Naive thymus-derived CD4-positive, alpha-beta T cell (primary cell): ENCODE measurements at regions of chr12 and their contacts with region 1.

Region 1: GRCh38 chr12:15590180-15590826 is 198.9 kb downstream of the EPS8 start:
- DNase-seq: peak; percentile 12 to 74 (median 66)
- ATAC-seq: peak; percentile 98
- H3K4me3 ChIP-seq: peak overlapping the region; percentile 40
- H3K4me3 Mint-ChIP-seq: peak overlapping the region; percentile 63 to 88 (median 78)
- H3K27ac ChIP-seq: no peak overlapping the region
- H3K27ac Mint-ChIP-seq: peak overlapping the region in 8 of 9 donors; percentile 61 to 86 (median 69)
- H3K4me1 ChIP-seq: peaks cover 0 to 5% of the 10 kb centered on the region in 2 donors
- H3K4me1 Mint-ChIP-seq: peaks cover 0 to 12% (median 8%) of the 10 kb centered on the region in 7 donors
- H3K27me3 ChIP-seq: no peaks in the 10 kb centered on the region
- H3K27me3 Mint-ChIP-seq: peaks cover 0 to 4% (median 0%) of the 10 kb centered on the region in 5 donors

Region 2: DNA sequence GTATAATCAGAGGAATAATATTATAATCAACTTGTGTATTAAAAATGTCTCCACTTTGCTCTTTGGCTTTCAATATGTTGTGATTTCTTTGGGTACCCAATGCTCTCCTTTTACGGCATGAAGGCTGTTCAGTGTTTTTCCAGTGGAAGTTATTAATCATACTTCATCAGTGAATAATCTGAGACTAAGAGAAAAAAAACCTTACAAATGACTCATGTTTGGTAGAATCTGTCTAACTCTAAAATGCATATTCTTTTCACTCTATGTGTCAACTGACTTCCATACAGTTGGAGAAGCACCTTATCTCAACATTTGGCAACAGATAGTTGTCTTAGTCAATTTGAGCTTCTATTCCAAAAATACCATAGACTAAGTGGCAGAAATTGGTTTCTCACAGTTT is 185.8 kb before region 1 on chr12:
- CTCF ChIA-PET with region 1: no interaction called
- POLR2A ChIA-PET with region 1: no interaction called
- intact Hi-C with region 1: no loop called
- DNase-seq: no peak
- ATAC-seq: no peak
- H3K4me3 ChIP-seq: no peak overlapping the region
- H3K4me3 Mint-ChIP-seq: no peak overlapping the region
- H3K27ac ChIP-seq: no peak overlapping the region
- H3K27ac Mint-ChIP-seq: no peak overlapping the region
- H3K4me1 ChIP-seq: no peaks in the 10 kb centered on the region
- H3K4me1 Mint-ChIP-seq: no peaks in the 10 kb centered on the region
- H3K27me3 ChIP-seq: no peaks in the 10 kb centered on the region
- H3K27me3 Mint-ChIP-seq: peaks cover 0 to 31% (median 14%) of the 10 kb centered on the region in 5 donors

Region 3: DNA sequence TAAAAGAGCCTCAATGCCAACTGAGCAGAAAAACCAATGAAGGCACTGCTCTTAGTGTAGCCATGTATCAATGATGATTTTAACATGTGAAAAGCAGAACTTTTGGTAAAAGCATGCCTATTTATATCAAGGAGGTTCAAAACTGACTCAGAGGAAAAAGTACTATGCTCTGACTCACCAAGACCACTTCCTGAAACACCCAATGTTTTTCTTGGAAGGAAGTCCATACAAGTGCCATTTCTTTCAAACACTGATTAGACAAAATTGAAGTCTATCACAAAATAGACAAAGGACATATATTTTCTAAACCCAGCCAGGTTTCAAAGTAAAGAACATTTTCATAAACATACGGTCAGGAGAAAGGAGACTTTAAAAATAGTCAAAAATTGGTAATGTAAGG is 110.3 kb after region 1 on chr12:
- CTCF ChIA-PET with region 1: no interaction called
- POLR2A ChIA-PET with region 1: no interaction called
- intact Hi-C with region 1: loop called in 1 of 2 experiments (anchors 5 kb)
- DNase-seq: no peak
- ATAC-seq: peak; percentile 64
- H3K4me3 ChIP-seq: no peak overlapping the region
- H3K4me3 Mint-ChIP-seq: peak overlapping the region in 1 of 10 donors; percentile 74
- H3K27ac ChIP-seq: no peak overlapping the region
- H3K27ac Mint-ChIP-seq: peak overlapping the region in 1 of 9 donors; percentile 77
- H3K4me1 ChIP-seq: no peaks in the 10 kb centered on the region
- H3K4me1 Mint-ChIP-seq: peaks cover 0 to 35% (median 7%) of the 10 kb centered on the region in 7 donors
- H3K27me3 ChIP-seq: no peaks in the 10 kb centered on the region
- H3K27me3 Mint-ChIP-seq: peaks cover 0 to 12% (median 0%) of the 10 kb centered on the region in 5 donors

Region 4: GRCh38 chr12:15772405-15773018 is 182.2 kb after region 1 on chr12:
- CTCF ChIA-PET with region 1: interaction called, 6 read pairs
- POLR2A ChIA-PET with region 1: no interaction called
- intact Hi-C with region 1: loop called in 1 of 2 experiments (anchors 1 kb)
- DNase-seq: peak in 1 of 9 donors; percentile 11
- ATAC-seq: no peak
- H3K4me3 ChIP-seq: no peak overlapping the region
- H3K4me3 Mint-ChIP-seq: no peak overlapping the region
- H3K27ac ChIP-seq: no peak overlapping the region
- H3K27ac Mint-ChIP-seq: no peak overlapping the region
- H3K4me1 ChIP-seq: no peaks in the 10 kb centered on the region
- H3K4me1 Mint-ChIP-seq: no peaks in the 10 kb centered on the region
- H3K27me3 ChIP-seq: no peaks in the 10 kb centered on the region
- H3K27me3 Mint-ChIP-seq: peaks cover 10 to 23% (median 15%) of the 10 kb centered on the region in 5 donors

Region 5: GRCh38 chr12:15899282-15899870 is 309.1 kb after region 1 on chr12:
- CTCF ChIA-PET with region 1: interaction called, 4 read pairs
- POLR2A ChIA-PET with region 1: no interaction called
- intact Hi-C with region 1: loop called (anchors 1 kb)
- DNase-seq: peak in 5 of 9 donors; percentile 22 to 32 (median 31)
- ATAC-seq: peak; percentile 72
- H3K4me3 ChIP-seq: no peak overlapping the region
- H3K4me3 Mint-ChIP-seq: no peak overlapping the region
- H3K27ac ChIP-seq: no peak overlapping the region
- H3K27ac Mint-ChIP-seq: peak overlapping the region in 6 of 9 donors; percentile 25 to 74 (median 53)
- H3K4me1 ChIP-seq: no peaks in the 10 kb centered on the region
- H3K4me1 Mint-ChIP-seq: peaks cover 0 to 13% (median 7%) of the 10 kb centered on the region in 7 donors
- H3K27me3 ChIP-seq: no peaks in the 10 kb centered on the region
- H3K27me3 Mint-ChIP-seq: no peaks in the 10 kb centered on the region